ENCODE measurements at regions of chr16 and their contacts with region 1.

Region 1: DNA sequence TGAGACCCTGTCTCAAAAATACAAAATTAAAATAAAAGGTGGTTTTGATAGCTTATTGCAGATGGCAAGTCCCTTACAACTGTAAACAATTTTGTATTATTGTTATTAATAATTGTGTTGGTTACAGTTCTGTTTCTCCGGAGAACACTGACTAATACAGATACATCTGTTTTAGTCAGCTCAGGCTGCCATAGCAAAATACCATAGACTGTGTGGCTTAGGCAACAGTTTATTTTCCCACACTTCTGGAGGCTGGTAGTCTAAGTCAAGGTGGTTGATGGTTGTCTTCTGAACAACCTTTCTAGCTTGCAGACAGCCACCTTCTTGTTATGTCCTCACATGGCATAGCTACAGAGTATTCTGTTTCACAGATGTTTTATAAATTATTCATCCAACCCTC is 14.2 kb upstream of the IL21R start:
- DNase-seq: no peak

Region 2: DNA sequence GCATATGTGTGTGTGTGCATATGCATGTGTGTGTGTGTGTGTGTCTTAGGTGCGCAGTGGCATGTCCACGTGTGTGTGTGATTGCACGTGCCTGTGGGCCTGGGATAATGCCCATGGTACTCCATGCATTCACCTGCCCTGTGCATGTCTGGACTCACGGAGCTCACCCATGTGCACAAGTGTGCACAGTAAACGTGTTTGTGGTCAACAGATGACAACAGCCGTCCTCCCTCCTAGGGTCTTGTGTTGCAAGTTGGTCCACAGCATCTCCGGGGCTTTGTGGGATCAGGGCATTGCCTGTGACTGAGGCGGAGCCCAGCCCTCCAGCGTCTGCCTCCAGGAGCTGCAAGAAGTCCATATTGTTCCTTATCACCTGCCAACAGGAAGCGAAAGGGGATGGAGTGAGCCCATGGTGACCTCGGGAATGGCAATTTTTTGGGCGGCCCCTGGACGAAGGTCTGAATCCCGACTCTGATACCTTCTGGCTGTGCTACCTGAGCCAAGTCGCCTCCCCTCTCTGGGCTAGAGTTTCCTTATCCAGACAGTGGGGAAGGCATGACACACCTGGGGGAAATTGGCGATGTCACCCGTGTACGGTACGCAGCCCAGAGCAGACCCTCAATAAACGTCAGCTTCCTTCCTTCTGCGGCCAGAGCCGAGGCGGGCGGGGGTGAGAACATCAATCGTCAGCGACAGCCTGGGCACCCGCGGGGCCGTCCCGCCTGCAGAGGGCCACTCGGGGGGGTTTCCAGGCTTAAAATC is 61.9 kb after region 1 on chr16:
- in situ Hi-C with region 1: loop called (anchors 10 kb)
- DNase-seq: peak; percentile 47

Region 3: DNA sequence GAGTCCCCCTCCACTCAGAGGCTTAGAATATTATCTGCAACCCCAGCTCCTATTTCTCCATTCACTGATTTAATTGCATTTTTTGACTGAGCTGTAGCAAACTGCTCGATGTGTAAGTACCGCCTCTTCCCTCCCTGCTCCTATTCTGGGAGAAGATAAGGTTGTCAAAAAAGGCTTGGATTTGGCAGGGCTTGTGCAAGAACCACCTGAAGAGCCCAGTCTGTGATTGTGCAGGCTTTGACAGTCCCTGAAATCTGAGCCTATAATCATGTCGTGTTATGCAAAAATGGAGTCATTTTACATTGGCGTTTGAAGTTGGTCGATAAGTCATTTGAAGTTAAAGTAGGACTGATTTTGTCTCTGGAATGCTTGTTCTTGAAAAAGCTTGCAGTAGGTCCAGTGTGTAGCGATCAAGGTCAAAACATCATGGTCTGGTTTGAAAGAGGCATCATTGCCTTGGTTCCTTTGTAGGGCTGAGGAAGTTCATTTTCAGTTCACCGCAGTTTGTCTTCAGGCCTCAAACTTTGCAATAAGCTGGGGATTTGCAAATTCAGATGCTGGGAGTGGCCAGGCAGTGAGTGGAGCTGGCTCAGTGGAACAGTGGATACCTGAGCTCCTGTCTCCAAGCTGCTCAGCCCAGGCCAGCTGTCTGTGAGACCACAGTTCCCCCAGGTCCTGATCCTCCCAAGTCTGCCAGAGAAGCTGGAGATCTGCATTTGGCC is 231.0 kb after region 1 on chr16:
- in situ Hi-C with region 1: no loop called
- DNase-seq: no peak

Measured in KBM-7 (cell line).